Lower leg skin (tissue), 4 donors: ENCODE measurements at regions of chr1 and their contacts with region 1.

Region 1: GRCh38 chr1:207890136-207890738 is 20.7 kb downstream of the CD34 start:
- DNase-seq: peak; percentile 70 to 91
- H3K4me3 ChIP-seq: no peak overlapping the region
- CTCF ChIP-seq: no peak
- POLR2A ChIP-seq: no peak

Region 2: DNA sequence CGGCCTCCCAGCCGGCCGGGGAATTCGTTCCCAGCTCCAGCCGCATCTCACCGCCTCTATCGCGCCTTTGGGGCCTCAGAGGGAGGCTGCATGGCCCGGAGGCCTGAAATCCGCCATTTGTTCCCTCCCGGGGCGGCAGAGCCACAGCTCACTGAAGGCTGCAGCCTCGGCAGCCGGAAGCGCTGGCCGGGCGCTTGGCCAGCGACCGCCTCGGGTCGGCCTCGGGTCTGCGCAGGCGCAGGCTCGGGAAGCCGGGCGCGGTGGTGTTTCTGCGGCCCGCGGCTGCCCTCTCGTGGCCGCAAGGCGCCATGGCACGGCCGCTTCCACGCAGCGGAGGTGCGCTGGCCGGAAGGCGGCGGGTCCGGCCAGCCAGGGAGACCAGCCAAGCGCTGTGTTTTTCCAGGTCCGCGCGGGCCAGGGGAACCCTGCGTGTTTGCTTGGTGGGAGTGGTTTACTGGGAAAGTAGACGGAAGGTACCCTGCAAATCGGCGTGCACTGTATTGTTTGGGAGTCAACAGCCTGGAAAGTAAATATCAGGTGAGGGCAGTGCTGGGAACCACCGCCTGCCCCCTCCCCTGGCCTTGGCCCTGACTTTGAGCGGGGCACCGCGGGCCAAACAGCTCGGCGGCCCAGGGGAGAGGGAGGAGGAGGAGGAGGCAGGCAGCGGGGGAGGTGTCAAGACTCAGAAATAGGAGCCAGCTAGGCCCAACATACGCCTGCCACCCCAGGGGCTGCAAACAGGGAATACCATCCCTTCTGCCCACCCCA is 73.4 kb after region 1 on chr1:
- intact Hi-C with region 1: loop called (anchors 5 kb)
- DNase-seq: peak; percentile 80 to 97
- H3K4me3 ChIP-seq: peak overlapping the region; percentile 4
- CTCF ChIP-seq: peak in 1 of 3 donors; percentile 94
- POLR2A ChIP-seq: peak in 1 of 2 donors; percentile 28